ENCODE measurements at regions of chr20 and their contacts with region 1.

Region 1: DNA sequence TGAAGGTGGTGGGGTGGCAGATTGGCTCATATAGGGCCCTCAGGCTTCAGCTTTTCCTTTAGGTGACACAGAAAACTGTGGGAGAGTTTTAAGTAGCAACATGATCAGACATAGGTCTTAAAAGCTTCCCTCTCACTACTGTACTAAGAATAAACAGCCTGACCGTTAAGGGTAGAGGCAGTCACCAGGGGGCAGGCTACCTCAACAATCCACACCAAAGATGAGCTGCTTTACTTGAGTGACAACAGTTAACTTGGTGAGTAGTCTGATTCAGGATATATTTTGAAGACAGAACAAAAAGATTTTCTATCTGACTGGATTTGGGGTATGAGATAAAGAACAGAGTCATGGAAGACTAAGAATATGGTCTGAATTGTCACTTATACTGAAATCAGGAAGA is 193.1 kb upstream of the SHLD1 start:
- DNase-seq: peak; percentile 66
- ATAC-seq: peak; percentile 94
- H3K4me3 ChIP-seq: no peak overlapping the region
- H3K27ac ChIP-seq: no peak overlapping the region
- H3K4me1 ChIP-seq: no peaks in the 10 kb centered on the region
- H3K27me3 ChIP-seq: no peaks in the 10 kb centered on the region
- CTCF ChIP-seq: peak; percentile 88

Region 2: GRCh38 chr20:5535125-5535771 is 21.9 kb before region 1 on chr20:
- CTCF ChIA-PET with region 1: no interaction called
- POLR2A ChIA-PET with region 1: interaction called, 15 read pairs
- intact Hi-C with region 1: no loop called
- DNase-seq: no peak
- ATAC-seq: no peak
- H3K4me3 ChIP-seq: no peak overlapping the region
- H3K27ac ChIP-seq: no peak overlapping the region
- H3K4me1 ChIP-seq: no peaks in the 10 kb centered on the region
- H3K27me3 ChIP-seq: no peaks in the 10 kb centered on the region
- CTCF ChIP-seq: no peak

Measured in PC-3 (cell line).